ENCODE measurements at regions of chr1 and their contacts with region 1.

Region 1: DNA sequence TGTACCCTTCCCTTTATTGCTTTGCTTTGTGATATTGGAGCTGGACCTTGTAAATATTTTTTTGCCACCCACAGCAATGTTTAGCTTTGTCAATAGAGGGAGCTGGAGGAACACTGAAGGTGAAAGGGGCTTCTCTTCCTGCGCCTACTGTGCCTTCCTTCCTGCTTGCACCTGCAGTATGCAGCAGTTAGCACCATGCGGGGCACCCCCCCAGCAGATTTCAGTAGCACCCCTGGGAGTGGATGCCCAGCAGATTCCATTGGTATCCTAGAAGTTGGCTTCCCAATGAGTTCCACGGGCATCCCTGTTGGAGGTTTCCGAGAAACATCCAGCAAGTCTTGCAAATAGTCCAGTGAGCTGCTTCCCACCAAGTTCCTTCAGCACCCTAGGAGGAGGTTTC is 25.6 kb downstream of the S100A10 start:
- DNase-seq: peak; percentile 52 to 74
- ATAC-seq: peak; percentile 79 to 84
- H3K4me3 ChIP-seq: no peak overlapping the region
- H3K27ac ChIP-seq: peak overlapping the region; percentile 77 to 89
- H3K4me1 ChIP-seq: peaks cover 49% of the 10 kb centered on the region
- CTCF ChIP-seq: peak; percentile 92
- EP300 ChIP-seq: no peak
- POLR2A ChIP-seq: no peak
- RAD21 ChIP-seq: peak; percentile 97 to 99

Region 2: DNA sequence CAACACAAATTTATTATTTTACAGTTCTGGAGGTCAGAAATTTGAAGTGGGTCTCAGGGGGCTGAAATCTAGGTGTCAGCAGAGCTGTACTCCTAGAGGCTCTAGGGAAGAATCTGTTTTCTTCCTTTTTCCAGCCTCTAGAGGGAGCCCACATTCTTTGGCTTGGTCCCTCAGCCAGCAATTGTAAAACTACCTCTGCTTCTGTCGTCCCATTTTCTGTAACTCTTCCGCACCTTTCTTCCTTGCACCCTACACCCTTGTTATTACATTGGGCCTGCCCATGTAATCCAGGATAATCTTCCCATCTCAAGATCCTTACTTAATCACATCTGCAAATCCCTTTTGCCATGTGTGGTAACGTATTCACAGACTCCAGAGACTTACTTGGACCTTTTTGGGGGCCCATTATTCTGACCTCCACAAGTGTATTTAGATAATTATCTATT is 34.0 kb before region 1 on chr1:
- CTCF ChIA-PET with region 1: interaction called, 70 read pairs
- POLR2A ChIA-PET with region 1: no interaction called
- DNase-seq: peak; percentile 54 to 76
- ATAC-seq: peak; percentile 94 to 97
- H3K4me3 ChIP-seq: no peak overlapping the region
- H3K27ac ChIP-seq: peak overlapping the region in 1 of 2 experiments; percentile 43; a peak in 1 of 6 replicates
- H3K4me1 ChIP-seq: peaks cover 33% of the 10 kb centered on the region
- CTCF ChIP-seq: peak; percentile 98
- EP300 ChIP-seq: no peak
- POLR2A ChIP-seq: no peak
- RAD21 ChIP-seq: peak; percentile 98 to 99

Region 3: DNA sequence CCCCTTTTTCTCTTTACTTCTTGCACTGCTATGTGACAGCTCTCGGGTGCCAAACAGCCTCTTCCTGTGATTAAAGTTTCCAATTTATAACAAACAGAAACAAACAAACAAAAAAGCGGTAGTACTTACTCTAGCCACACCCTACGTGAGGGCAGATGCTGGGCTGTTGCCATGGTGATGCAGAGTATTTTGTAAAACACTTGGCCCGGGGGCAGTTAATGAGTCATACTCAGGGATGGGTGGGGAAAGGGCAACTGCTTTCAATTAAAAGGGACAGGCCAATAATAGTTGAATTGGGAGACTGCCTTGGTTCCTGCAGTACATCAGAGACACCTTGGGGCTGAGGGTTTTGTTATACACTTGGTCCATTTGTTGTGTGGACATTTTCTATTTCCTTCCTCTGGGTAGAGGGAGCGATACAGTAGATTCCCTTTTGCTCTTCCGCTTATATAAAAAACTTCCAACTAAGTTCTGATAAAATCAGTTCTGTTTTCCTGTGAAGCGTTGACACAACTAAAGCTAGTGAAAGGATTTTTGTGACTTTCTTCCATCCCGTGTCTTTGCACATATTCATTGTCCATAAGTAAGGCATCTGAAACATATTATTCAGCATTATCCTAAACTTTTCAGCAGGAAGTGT is 22.2 kb before region 1 on chr1:
- CTCF ChIA-PET with region 1: interaction called, 35 read pairs
- POLR2A ChIA-PET with region 1: interaction called, 3 read pairs
- DNase-seq: peak; percentile 90 to 97
- ATAC-seq: peak; percentile 73 to 83
- H3K4me3 ChIP-seq: 0 out of 3 replicates have a peak overlapping the region, but pooled peaks have one; percentile 3
- H3K27ac ChIP-seq: peak overlapping the region; percentile 63 to 79
- H3K4me1 ChIP-seq: peaks cover 62% of the 10 kb centered on the region
- CTCF ChIP-seq: no peak
- EP300 ChIP-seq: no peak
- POLR2A ChIP-seq: no peak
- RAD21 ChIP-seq: 0 out of 5 replicates have a peak, but pooled peaks of 1 of the 2 experiments have one; percentile 6

Region 4: GRCh38 chr1:151993654-151994496 is 25.8 kb after region 1 on chr1 and contains the start of gene S100A10:
- CTCF ChIA-PET with region 1: interaction called, 1,410 read pairs
- POLR2A ChIA-PET with region 1: interaction called, 26 read pairs
- DNase-seq: peak in 1 of 2 experiments; percentile 88
- ATAC-seq: peak; percentile 51 to 67
- H3K4me3 ChIP-seq: peak within 1 kb of the TSS; percentile 87
- H3K27ac ChIP-seq: peak within 1 kb of the TSS; percentile 97
- H3K4me1 ChIP-seq: peaks cover 59% of the 10 kb centered on the region
- CTCF ChIP-seq: no peak
- EP300 ChIP-seq: no peak
- POLR2A ChIP-seq: peak; percentile 89
- RAD21 ChIP-seq: no peak; a peak in 1 of 5 replicates
- polyA plus RNA-seq, gene S100A10: 505 and 515 TPM in 2 replicates

Region 5: DNA sequence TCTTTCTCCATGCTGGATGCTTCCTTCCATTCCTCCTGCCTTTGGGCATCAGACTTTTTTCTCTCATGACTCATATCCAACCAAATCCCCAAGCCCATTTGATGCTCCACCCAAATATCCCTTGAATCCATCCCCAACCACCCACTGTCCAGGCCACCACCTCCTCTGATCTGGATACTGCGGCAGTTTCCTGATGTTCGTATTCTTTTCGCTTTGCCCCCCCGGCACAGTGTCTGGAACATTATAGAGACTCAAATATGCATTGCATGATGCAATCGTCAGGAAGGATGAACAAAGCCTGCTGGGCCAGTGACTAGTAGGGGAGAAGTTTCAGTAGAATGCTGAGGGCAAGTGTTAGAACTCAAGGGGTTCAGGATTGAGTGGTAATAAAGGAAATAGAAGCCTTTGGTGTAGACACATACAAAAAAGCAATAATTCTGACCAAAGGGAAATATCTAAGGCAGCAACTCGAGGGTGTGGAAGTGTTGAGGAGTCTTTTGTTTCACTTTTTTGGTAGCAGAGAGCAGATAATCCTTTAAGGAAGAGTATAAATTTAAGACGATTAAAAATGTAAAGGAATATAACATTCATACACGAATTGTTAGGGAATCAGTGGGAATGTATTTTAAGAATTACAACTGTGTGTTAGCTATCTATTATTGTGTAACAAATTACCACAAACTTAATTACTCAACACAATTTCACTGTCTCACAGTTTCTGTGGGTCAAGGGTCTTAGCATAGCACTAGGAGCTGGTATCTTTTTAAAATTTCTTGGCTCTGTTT is 61.3 kb after region 1 on chr1:
- CTCF ChIA-PET with region 1: interaction called, 25 read pairs
- POLR2A ChIA-PET with region 1: no interaction called
- DNase-seq: no peak
- ATAC-seq: peak; percentile 46 to 54; a peak in 4 of 6 replicates
- H3K4me3 ChIP-seq: no peak overlapping the region
- H3K27ac ChIP-seq: peak overlapping the region; percentile 57 to 77
- H3K4me1 ChIP-seq: peaks cover 35% of the 10 kb centered on the region
- CTCF ChIP-seq: no peak
- EP300 ChIP-seq: no peak
- POLR2A ChIP-seq: no peak
- RAD21 ChIP-seq: no peak

Region 6: DNA sequence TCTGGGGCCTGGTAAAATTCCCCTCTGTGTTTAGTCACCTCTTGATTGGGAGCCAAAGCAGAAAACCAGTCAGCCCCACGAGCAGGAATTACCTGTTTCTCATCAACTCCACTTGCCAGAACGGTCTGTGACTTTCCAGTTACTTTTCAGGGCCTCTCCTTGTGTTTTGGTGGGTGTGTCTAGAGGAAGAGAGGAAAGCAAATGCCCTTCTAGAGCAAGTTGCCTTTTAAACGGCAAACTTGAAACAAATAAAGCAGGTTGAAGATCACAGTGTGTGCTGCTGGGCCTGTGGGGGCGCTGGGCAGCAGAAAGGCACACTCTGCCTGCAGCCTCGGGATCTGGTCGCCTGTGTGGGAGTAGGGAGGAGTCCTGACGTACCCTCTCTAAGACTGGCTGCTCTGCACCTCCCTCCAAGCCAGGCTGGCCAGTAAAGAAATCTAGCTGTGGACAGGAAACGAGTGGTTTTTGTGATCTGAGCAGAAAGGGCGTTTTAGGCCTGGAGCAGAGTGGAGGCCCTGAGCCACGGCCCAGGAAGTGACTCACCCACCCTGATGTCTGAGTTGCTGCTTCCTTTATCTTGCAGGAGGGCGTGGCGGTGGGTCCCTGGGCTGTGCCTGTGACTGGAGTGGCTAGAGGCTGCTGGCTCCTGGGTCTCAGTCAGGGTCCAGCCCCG is 79.8 kb after region 1 on chr1:
- CTCF ChIA-PET with region 1: interaction called, 10 read pairs
- POLR2A ChIA-PET with region 1: interaction called, 3 read pairs
- DNase-seq: peak; percentile 83 to 100
- ATAC-seq: peak; percentile 95
- H3K4me3 ChIP-seq: peak overlapping the region; percentile 43
- H3K27ac ChIP-seq: peak overlapping the region; percentile 95 to 96
- H3K4me1 ChIP-seq: peaks cover 45% of the 10 kb centered on the region
- CTCF ChIP-seq: peak; percentile 57; the same call in 2 of the 3 replicates
- EP300 ChIP-seq: no peak; a peak in 1 of 5 replicates
- POLR2A ChIP-seq: peak; percentile 66
- RAD21 ChIP-seq: peak; percentile 32 to 45; a peak in 4 of 5 replicates

Region 7: DNA sequence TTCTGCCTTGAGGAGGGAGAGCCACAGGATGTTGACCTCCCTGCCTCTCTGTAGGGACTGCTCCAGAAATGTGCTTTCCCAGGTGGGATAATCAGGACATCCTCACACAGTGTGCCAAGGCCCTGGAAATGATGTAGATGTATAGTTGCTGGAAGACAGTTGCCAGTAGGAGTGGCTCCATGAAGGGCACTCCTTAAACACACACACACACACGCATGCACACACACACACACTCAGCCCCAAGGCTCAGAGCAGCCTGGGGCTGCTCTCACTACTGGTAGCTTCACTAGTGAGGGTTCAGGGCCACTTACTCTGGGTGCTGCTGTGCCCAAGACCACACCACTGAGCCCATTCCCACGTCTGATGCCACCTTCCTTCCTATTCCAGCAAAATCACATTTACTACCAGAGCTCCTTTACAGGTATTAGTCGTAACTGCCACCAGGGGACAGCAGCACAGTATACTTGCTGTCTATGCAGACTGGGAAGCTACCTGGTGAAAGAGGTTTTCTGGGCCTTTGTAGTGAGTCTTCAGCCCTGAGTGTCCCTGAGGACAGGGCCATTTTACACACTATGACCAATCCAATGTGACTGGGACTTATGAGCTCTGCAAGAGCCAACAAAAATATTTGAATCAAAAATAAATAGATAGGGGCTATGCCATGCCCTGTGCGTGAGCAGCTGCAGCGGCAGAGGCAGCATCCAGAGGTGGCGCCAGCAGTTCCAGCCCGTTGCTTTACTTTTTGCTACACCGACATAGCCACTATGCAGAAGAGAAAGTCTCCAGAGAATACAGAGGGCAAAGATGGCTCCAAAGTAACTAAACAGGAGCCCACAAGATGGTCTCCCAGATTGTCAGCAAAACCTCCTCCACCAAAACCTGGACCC is 431.0 kb after region 1 on chr1:
- CTCF ChIA-PET with region 1: no interaction called
- POLR2A ChIA-PET with region 1: no interaction called
- DNase-seq: peak; percentile 44 to 66
- ATAC-seq: peak; percentile 98 to 99
- H3K4me3 ChIP-seq: no peak overlapping the region
- H3K27ac ChIP-seq: no peak overlapping the region
- H3K4me1 ChIP-seq: no peaks in the 10 kb centered on the region; the same call in 2 of the 3 replicates
- CTCF ChIP-seq: peak; percentile 61
- EP300 ChIP-seq: no peak
- POLR2A ChIP-seq: no peak
- RAD21 ChIP-seq: peak; percentile 52 to 63; a peak in 4 of 5 replicates

Measured in A549 (cell line).